Ascending aorta (tissue), 2 donors: ENCODE measurements at regions of chrX and their contacts with region 1.

Region 1: DNA sequence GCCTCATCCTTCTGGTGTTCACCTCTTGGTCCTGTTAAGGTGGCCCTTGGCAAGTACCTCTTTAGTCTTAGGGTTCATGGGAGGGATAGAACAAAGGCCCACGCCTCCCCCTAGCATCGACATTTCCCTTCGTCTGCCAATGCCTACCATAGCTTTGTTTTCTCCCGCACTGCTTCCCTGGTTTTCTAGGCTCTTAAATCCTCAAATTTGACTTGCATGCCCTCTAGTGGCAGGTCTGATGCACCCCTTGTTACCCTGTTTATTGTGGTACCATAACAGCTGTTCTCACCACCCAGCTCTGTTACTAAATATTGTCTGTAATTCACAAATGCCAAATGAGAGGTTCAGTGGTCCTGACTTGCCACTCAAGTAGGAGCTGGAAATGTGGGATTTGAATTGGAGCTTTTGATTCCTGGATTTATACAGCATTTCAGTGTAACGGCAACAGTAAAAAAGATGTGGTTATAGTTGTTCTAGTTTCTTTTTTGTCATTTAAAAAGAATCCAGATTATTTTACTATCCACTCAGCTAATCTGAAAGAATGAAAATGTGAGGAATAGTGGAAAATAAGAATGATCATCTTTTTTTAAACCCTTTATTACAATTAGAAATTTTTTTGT is 100.1 kb downstream of the REPS2 start:
- DNase-seq: peak in 1 of 2 donors; percentile 84
- H3K4me3 ChIP-seq: no peak overlapping the region
- H3K27ac ChIP-seq: no peak overlapping the region
- H3K4me1 ChIP-seq: no peaks in the 10 kb centered on the region
- H3K27me3 ChIP-seq: no peaks in the 10 kb centered on the region
- CTCF ChIP-seq: peak; percentile 53 to 71 (median 64)

Region 2: DNA sequence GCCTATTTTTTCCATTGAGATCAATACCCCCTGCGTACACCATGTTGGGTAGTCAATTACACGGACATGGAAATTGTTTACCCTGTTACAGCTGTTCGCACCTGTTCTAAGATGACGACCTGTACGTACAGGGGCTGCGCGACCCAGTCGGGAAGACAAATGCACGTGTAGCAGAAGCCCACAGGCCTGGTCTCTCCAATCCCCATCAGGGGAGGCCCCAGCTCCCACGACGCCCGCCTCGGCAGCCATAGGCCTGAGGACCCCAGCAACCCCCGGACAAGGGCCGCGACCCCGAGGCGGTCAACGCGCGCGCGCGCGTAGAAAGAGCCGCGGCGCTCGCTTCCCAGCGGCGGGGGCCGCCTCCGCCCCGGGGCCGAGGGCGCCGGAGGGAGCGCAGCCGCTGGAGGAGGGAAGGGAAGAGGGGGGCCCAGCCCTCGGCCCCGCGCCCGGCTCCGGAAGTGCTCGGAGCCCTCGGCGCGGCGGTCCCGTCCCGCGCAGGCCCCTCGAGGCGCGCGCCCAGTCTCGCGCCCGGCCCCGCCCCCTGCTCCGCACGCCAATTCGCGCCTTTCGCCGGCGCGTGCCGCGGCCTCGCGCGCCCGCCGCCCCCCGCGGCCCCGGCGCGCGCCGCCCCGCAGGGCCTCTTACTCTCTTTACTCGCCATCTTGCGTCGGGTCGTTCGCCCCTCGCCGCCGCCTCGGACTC is 177.0 kb before region 1 on chrX:
- intact Hi-C with region 1: no loop called
- DNase-seq: no peak
- H3K4me3 ChIP-seq: peak overlapping the region; percentile 80
- H3K27ac ChIP-seq: peak overlapping the region; percentile 96 to 97
- H3K4me1 ChIP-seq: peaks cover 0 to 7% of the 10 kb centered on the region in 2 donors
- H3K27me3 ChIP-seq: no peaks in the 10 kb centered on the region
- CTCF ChIP-seq: no peak

Region 3: DNA sequence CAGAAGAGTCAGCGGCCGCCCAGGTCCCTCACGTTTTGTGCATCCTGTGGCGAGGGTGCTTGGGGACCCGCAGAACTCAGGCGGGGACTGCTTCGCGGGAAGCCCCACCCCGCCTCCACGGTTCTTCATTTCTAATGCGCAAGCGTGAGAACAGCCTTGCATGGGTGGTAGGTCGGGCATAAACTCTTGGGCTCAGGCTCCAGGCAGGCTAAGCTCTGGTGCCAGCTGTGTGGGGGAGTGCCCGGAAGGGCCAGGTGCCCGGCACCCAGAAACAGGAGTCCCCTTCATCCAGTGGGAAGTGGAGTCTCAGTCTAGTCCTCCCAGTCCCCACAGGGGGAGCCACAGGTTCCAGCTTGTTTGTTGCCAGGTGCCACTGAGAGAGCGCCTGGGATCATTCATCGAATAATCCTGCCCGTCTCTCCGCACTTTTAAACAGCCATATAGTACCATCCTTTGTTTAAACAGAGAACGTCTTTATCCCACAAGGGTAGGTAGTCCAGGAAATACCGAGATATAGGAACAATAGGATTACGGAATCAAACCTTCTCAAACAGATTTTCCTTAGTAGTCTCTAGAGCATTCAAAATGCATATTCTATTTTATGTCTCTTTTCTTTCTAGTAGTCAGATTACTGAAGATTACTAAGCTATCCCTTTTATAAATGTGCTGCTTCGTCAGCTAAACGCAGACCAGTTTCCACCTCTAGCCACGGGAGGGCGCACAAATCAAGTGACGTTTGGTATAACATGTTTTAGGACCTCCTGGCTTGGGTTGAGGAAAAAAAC is 163.7 kb before region 1 on chrX:
- intact Hi-C with region 1: loop called (anchors 2 kb)
- DNase-seq: peak; percentile 20 to 84
- H3K4me3 ChIP-seq: peak overlapping the region; percentile 37 to 57
- H3K27ac ChIP-seq: peak overlapping the region in 1 of 2 donors; percentile 53
- H3K4me1 ChIP-seq: no peaks in the 10 kb centered on the region
- H3K27me3 ChIP-seq: no peaks in the 10 kb centered on the region
- CTCF ChIP-seq: peak; percentile 27 to 59 (median 49)

Region 4: GRCh38 chrX:17007206-17007683 is 39.3 kb before region 1 on chrX:
- intact Hi-C with region 1: loop called (anchors 1 kb)
- DNase-seq: no peak
- H3K4me3 ChIP-seq: no peak overlapping the region
- H3K27ac ChIP-seq: no peak overlapping the region
- H3K4me1 ChIP-seq: no peaks in the 10 kb centered on the region
- H3K27me3 ChIP-seq: no peaks in the 10 kb centered on the region
- CTCF ChIP-seq: peak in 2 of 3 experiments; percentile 19 to 37